ENCODE measurements at regions of chr5 and their contacts with region 1.

Region 1: GRCh38 chr5:80191991-80192398 is 63.9 kb downstream of the SERINC5 start:
- DNase-seq: peak in 7 of 9 experiments; percentile 43 to 74 (median 64)
- ATAC-seq: peak; percentile 67
- H3K4me3 ChIP-seq: peak overlapping the region; percentile 17 to 34
- H3K4me3 Mint-ChIP-seq: peak overlapping the region; percentile 81
- H3K27ac ChIP-seq: peak overlapping the region; percentile 38 to 69
- H3K27ac Mint-ChIP-seq: peak overlapping the region; percentile 91
- H3K4me1 ChIP-seq: peaks cover 95% of the 10 kb centered on the region
- H3K4me1 Mint-ChIP-seq: peaks cover 84% of the 10 kb centered on the region
- H3K27me3 ChIP-seq: no peaks in the 10 kb centered on the region
- H3K27me3 Mint-ChIP-seq: no peaks in the 10 kb centered on the region
- CTCF ChIP-seq: no peak

Region 2: DNA sequence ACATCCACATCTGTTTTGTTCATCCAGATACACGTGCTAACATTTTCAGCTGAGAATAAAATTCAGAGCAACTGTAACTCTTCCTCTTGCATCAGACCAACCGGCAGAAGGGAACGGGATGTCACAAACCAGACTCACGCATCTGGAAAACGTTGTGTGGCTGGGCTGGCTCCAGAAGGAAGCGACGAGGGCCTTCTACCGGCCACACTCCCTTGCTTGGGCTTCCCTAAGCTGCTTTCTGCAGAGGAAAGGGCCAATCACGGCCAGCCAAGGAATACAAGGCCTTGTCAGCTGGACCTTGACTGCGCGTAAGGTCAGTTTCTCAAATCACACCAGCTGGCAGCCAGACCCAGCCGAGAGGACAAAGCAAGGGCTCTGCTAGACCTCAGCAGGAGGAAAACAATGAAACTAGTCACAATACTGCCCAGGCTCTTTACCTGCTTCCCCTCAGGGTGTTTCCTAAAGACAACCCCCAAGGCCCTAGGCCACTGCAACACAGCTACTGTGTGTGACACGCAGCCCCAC is 50.8 kb before region 1 on chr5:
- CTCF ChIA-PET with region 1: interaction called, 3 read pairs
- POLR2A ChIA-PET with region 1: interaction called, 8 read pairs
- intact Hi-C with region 1: loop called in 1 of 2 experiments (anchors 5 kb)
- DNase-seq: peak in 1 of 9 experiments; percentile 47
- ATAC-seq: no peak
- H3K4me3 ChIP-seq: no peak overlapping the region
- H3K4me3 Mint-ChIP-seq: peak overlapping the region; percentile 50
- H3K27ac ChIP-seq: peak overlapping the region; percentile 9 to 55
- H3K27ac Mint-ChIP-seq: peak overlapping the region; percentile 91
- H3K4me1 ChIP-seq: peaks cover 70% of the 10 kb centered on the region
- H3K4me1 Mint-ChIP-seq: peaks cover 74% of the 10 kb centered on the region
- H3K27me3 ChIP-seq: no peaks in the 10 kb centered on the region
- H3K27me3 Mint-ChIP-seq: no peaks in the 10 kb centered on the region
- CTCF ChIP-seq: no peak

Region 3: GRCh38 chr5:80153586-80154126 is 38.3 kb before region 1 on chr5:
- CTCF ChIA-PET with region 1: interaction called, 5 read pairs
- POLR2A ChIA-PET with region 1: interaction called, 9 read pairs
- intact Hi-C with region 1: loop called (anchors 5 kb)
- DNase-seq: peak in 6 of 9 experiments; percentile 35 to 76 (median 46)
- ATAC-seq: peak; percentile 66
- H3K4me3 ChIP-seq: no peak overlapping the region
- H3K4me3 Mint-ChIP-seq: peak overlapping the region; percentile 45
- H3K27ac ChIP-seq: peak overlapping the region; percentile 25 to 64
- H3K27ac Mint-ChIP-seq: peak overlapping the region; percentile 92
- H3K4me1 ChIP-seq: peaks cover 55% of the 10 kb centered on the region
- H3K4me1 Mint-ChIP-seq: peaks cover 65% of the 10 kb centered on the region
- H3K27me3 ChIP-seq: no peaks in the 10 kb centered on the region
- H3K27me3 Mint-ChIP-seq: no peaks in the 10 kb centered on the region
- CTCF ChIP-seq: no peak

Region 4: DNA sequence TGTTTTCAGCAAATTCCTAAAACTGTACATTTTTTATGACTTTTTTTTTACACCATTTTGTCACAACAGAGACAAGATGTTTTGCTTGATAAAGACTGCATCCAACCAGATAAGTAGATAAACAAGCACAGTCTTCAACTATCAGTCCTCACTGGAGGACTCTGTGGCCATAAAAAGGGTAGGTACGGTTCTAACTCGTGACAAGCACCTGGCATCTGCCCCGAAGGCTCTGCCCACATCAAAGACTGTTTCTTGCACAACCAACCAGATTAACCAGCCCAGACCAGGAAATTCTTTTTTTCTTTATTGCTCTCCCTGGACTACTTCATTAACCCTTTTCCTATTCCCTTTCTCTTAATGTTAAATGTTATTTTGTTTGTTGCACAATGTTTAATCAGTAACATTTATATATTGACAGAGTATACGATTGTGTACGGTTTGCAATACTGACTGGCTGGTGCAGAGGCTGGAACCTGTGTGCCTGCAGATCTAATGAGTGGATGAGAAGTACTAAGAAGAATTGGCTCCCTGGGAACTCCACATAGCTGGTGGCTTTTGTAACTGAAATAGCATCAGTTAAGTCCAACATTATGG is 10.3 kb before region 1 on chr5:
- CTCF ChIA-PET with region 1: interaction called, 6 read pairs
- POLR2A ChIA-PET with region 1: interaction called, 55 read pairs
- intact Hi-C with region 1: loop called in 1 of 2 experiments (anchors 1 kb)
- DNase-seq: peak in 7 of 9 experiments; percentile 42 to 85 (median 67)
- ATAC-seq: peak; percentile 32
- H3K4me3 ChIP-seq: peak overlapping the region in 1 of 2 experiments; percentile 3
- H3K4me3 Mint-ChIP-seq: peak overlapping the region; percentile 64
- H3K27ac ChIP-seq: peak overlapping the region; percentile 20 to 23
- H3K27ac Mint-ChIP-seq: peak overlapping the region; percentile 96
- H3K4me1 ChIP-seq: peaks cover 89% of the 10 kb centered on the region
- H3K4me1 Mint-ChIP-seq: peaks cover 87% of the 10 kb centered on the region
- H3K27me3 ChIP-seq: no peaks in the 10 kb centered on the region
- H3K27me3 Mint-ChIP-seq: no peaks in the 10 kb centered on the region
- CTCF ChIP-seq: no peak

Region 5: DNA sequence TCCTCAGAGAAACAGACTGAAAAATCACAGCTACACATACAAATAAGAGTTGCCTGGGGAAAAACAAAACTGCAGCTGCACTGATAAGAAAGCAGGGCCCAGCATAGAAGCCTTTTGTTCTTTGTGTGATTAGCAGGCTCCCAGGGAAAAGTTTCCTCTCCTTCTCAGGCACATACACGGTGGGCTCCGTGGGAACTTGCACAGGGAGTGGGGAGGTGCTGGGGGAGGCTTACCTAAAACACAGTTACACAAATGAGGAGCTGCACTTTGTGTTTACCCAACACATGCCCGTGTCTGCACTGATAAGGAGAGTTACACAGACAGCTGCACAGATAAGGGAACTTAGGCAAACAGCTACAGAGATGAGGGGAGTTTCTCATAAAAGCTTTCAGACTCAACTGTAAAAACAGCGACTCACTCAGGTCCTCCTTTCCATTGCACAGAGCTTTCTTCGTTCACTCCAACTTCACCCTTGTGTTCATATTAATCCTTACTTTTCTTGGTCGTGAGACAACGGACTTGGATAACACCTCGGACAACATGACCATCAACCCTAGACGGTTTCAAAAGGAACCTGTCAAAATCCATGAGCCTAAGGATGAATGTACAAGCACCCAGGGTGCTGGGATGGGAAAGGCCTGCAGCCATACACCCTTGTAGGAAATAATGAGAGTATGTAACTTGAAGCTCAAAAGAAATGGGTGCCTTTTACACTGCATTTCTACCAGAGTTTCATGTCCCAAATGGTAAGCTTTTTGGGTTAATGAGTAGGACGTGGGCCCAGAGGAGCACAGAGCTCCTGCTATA is 13.0 kb after region 1 on chr5:
- CTCF ChIA-PET with region 1: interaction called, 8 read pairs
- POLR2A ChIA-PET with region 1: interaction called, 9 read pairs
- intact Hi-C with region 1: loop called in 1 of 2 experiments (anchors 1 kb)
- DNase-seq: peak in 2 of 9 experiments; percentile 31 to 64
- ATAC-seq: peak; percentile 82
- H3K4me3 ChIP-seq: no peak overlapping the region
- H3K4me3 Mint-ChIP-seq: peak overlapping the region; percentile 47
- H3K27ac ChIP-seq: peak overlapping the region in 1 of 2 experiments; percentile 27
- H3K27ac Mint-ChIP-seq: peak overlapping the region; percentile 87
- H3K4me1 ChIP-seq: peaks cover 78% of the 10 kb centered on the region
- H3K4me1 Mint-ChIP-seq: peaks cover 88% of the 10 kb centered on the region
- H3K27me3 ChIP-seq: no peaks in the 10 kb centered on the region
- H3K27me3 Mint-ChIP-seq: no peaks in the 10 kb centered on the region
- CTCF ChIP-seq: peak; percentile 34

Region 6: GRCh38 chr5:80216753-80217596 is 25.0 kb after region 1 on chr5:
- CTCF ChIA-PET with region 1: interaction called, 6 read pairs
- POLR2A ChIA-PET with region 1: interaction called, 15 read pairs
- intact Hi-C with region 1: loop called in 1 of 2 experiments (anchors 2 kb)
- DNase-seq: peak in 3 of 9 experiments; percentile 28 to 45 (median 32)
- ATAC-seq: peak; percentile 27
- H3K4me3 ChIP-seq: peak overlapping the region in 1 of 2 experiments; percentile 31
- H3K4me3 Mint-ChIP-seq: peak overlapping the region; percentile 70
- H3K27ac ChIP-seq: peak overlapping the region; percentile 39 to 55
- H3K27ac Mint-ChIP-seq: peak overlapping the region; percentile 93
- H3K4me1 ChIP-seq: peaks cover 93% of the 10 kb centered on the region
- H3K4me1 Mint-ChIP-seq: peaks cover 92% of the 10 kb centered on the region
- H3K27me3 ChIP-seq: no peaks in the 10 kb centered on the region
- H3K27me3 Mint-ChIP-seq: no peaks in the 10 kb centered on the region
- CTCF ChIP-seq: no peak

Measured in CD8-positive, alpha-beta T cell (primary cell).